ENCODE measurements at regions of chr14 and their contacts with region 1.

Region 1: GRCh38 chr14:104657101-104657524 is 32.3 kb upstream of the INF2 start:
- DNase-seq: peak; percentile 89
- H3K4me3 ChIP-seq: peak overlapping the region; percentile 60
- H3K27ac ChIP-seq: peak overlapping the region; percentile 99
- H3K4me1 ChIP-seq: peaks cover 71% of the 10 kb centered on the region
- CTCF ChIP-seq: no peak

Region 2: DNA sequence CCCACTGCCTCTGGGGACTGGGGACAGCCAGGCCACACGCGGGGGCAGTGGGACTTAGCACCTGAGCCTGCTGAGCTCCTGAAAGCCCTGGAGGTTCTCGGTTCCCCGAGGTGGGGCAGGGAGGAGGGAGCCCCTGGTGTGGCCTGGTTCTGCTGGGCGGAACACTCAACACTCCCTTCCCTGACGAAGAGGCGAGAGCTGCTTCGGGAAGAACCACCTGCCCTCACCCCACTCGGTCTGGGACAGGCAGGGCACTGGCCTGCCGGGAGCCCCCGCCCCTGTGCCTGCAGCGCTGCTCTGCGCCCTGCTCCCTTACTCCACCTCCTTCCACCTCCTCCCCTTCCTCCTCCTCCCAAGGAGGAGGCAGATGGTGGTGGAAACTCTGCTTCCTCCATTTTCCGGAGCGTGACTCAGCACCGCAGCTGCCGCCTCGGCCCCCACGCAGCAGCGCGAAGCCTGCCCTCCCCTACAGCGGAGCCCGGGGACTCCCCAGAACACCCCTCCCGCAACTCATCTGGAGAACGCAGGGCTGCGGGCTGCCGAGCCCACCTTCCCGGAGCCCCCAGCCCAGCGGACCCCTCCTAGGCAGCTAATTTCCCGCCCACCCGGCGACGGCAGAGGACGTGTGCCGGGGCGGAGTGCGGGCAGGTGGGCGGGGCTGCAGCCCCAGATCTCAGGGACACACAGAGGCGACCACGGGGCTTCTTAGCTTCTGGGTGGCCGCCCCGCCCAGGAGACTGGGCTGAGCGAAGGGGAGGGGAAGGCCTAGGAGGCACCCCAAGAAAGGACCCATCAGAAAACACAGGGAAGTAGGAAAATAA is 20.6 kb after region 1 on chr14:
- CTCF ChIA-PET with region 1: interaction called, 5 read pairs
- POLR2A ChIA-PET with region 1: interaction called, 12 read pairs
- intact Hi-C with region 1: loop called (anchors 1 kb)
- DNase-seq: peak; percentile 57
- H3K4me3 ChIP-seq: peak overlapping the region; percentile 52
- H3K27ac ChIP-seq: no peak overlapping the region
- H3K4me1 ChIP-seq: peaks cover 42% of the 10 kb centered on the region
- CTCF ChIP-seq: no peak

Region 3: GRCh38 chr14:104687601-104688504 is 30.7 kb after region 1 on chr14:
- CTCF ChIA-PET with region 1: no interaction called
- POLR2A ChIA-PET with region 1: interaction called, 11 read pairs
- intact Hi-C with region 1: no loop called
- DNase-seq: no peak
- H3K4me3 ChIP-seq: peak overlapping the region; percentile 26
- H3K27ac ChIP-seq: peak overlapping the region; percentile 67
- H3K4me1 ChIP-seq: peaks cover 51% of the 10 kb centered on the region
- CTCF ChIP-seq: no peak

Region 4: DNA sequence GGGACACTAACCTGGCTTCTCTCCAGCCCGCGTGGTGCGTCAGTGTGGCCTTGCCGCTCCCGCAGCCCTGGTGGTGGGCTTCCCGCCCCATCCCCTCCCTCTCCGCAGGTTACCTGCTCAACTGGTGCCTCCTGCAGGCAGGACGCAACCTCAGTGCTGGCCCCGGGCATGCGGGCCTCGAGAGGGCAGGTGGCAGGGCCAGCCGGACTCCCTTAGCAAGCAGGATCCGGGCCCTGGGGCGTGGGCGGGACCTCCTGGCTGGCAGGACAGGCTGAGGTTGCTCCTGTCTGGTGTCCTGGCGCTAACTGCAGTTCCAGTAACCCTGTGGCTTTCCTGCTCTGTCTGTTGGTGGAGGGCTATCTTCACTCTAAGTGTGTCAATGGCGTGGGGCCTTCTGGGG is 58.3 kb after region 1 on chr14:
- CTCF ChIA-PET with region 1: no interaction called
- POLR2A ChIA-PET with region 1: no interaction called
- intact Hi-C with region 1: no loop called
- DNase-seq: no peak
- H3K4me3 ChIP-seq: no peak overlapping the region
- H3K27ac ChIP-seq: no peak overlapping the region
- H3K4me1 ChIP-seq: peaks cover 5% of the 10 kb centered on the region
- CTCF ChIP-seq: no peak

Region 5: GRCh38 chr14:104752735-104753531 is 95.8 kb after region 1 on chr14 and contains the start of gene SIVA1:
- CTCF ChIA-PET with region 1: interaction called, 3 read pairs
- POLR2A ChIA-PET with region 1: interaction called, 5 read pairs
- intact Hi-C with region 1: loop called (anchors 2 kb)
- DNase-seq: peak; percentile 99
- H3K4me3 ChIP-seq: peak within 1 kb of the TSS; percentile 91
- H3K27ac ChIP-seq: peak within 1 kb of the TSS; percentile 82
- H3K4me1 ChIP-seq: peaks cover 57% of the 10 kb centered on the region
- CTCF ChIP-seq: no peak
- total RNA-seq, gene SIVA1: 215 and 244 TPM in 2 replicates

Region 6: DNA sequence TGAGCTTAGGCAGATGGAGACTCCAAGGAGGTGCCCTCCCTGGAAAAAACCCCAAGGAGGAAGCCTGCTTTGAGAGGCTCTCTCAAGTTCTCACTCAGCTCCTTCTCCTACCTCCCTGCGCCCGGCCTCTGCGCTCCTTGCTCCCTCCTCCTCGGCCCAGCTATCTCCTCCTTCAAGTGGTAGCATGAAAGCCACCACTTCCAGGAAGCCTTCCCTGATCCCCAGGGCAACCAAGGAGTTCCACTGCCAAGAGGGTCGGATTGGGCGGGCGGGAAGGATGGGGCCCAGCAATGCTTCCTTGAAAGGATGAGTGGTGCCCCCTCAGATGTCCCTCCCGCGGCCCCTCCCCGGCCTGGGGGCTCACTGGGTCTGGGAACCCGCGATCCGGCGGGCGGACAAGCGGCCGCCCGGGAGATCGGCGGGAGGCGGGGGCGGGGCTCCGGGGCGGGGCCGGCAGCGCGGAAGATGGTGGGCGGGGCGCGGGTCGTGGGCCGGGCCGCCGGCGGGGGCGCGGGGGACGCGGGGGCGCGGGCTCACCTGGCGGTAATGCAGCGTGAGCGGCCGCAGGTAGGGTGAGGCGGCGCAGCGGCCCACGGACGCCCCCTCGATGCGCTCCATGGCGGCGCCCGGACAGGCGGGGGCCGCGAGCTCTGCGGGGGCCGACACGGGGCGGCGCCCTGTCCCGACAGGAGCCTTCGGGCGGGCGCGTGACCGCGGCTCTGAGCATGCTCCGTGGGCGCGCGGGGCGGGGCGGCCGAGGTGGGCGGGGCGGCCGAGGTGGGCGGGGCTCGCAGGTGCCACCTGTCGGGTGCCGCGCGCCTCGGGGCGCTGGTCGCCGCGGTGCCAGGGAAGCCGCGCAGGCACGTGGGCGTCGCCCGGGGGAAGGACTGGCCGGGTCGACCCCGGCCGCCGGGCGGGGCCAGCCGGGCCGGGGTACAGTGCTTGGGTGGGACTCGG is 523.8 kb after region 1 on chr14 and contains the start of gene NUDT14:
- CTCF ChIA-PET with region 1: no interaction called
- POLR2A ChIA-PET with region 1: interaction called, 4 read pairs
- intact Hi-C with region 1: loop called (anchors 5 kb)
- DNase-seq: peak; percentile 84
- H3K4me3 ChIP-seq: peak within 1 kb of the TSS; percentile 68
- H3K27ac ChIP-seq: no peak within 1 kb of the TSS
- H3K4me1 ChIP-seq: peaks cover 30% of the 10 kb centered on the region
- CTCF ChIP-seq: no peak
- total RNA-seq, gene NUDT14: 19.5 and 32.1 TPM in 2 replicates

Measured in OCI-LY7 (cell line).